Motor neuron (in vitro differentiated cells): ENCODE measurements at regions of chr6 and their contacts with region 1.

Region 1: DNA sequence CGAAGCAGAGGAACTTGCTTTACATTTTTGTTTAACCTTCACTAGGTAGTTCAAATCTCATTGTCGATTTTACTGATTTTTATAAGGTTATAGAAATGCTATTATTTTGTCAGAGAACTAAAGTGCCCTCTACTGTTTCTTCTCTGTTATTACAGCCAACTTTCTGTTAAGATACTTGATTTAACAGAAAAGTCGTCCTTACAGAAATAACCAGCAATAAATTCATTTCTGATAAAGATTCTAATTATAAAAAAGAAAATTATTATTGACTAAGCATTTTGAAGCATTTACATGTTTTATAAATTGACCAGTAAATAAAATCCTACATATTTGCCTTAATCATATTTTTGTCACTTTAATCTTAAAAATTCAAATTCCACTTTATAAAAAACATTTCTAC is 60.8 kb downstream of the OGFRL1 start:
- ATAC-seq: no peak
- H3K4me3 ChIP-seq: no peak overlapping the region
- H3K27ac ChIP-seq: no peak overlapping the region
- H3K4me1 ChIP-seq: peaks cover 10 to 26% of the 10 kb centered on the region in 2 donors

Region 2: GRCh38 chr6:70336996-70337742 is 1012.2 kb before region 1 on chr6:
- in situ Hi-C with region 1: no loop called
- ATAC-seq: no peak
- H3K4me3 ChIP-seq: no peak overlapping the region
- H3K27ac ChIP-seq: no peak overlapping the region
- H3K4me1 ChIP-seq: no peaks in the 10 kb centered on the region

Region 3: GRCh38 chr6:71043902-71044301 is 305.5 kb before region 1 on chr6:
- in situ Hi-C with region 1: loop called in 1 of 9 experiments (anchors 25 kb)
- ATAC-seq: no peak
- H3K4me3 ChIP-seq: no peak overlapping the region
- H3K27ac ChIP-seq: no peak overlapping the region
- H3K4me1 ChIP-seq: peaks cover 20 to 32% of the 10 kb centered on the region in 2 donors

Region 4: DNA sequence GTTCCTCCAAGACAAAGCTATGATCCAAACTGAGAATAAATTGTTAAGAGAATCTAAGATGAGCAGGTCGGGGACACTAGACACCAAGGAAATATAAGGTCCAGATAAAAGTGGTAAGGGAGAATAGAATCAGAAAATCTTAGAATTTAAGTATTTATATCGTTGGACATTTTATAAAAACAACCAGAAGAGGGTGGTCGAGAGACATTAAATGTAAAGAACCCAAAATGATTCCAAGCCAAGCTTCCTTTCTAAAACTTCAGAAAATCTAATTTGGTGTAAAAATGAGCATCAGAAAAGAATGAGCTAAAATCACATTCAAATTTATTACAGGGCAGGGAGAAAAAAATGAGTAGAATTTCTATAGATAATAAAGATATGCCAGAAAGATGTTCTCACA is 158.6 kb before region 1 on chr6:
- in situ Hi-C with region 1: loop called in 3 of 9 experiments (anchors 25 kb)
- ATAC-seq: no peak
- H3K4me3 ChIP-seq: no peak overlapping the region
- H3K27ac ChIP-seq: no peak overlapping the region
- H3K4me1 ChIP-seq: peaks cover 2 to 8% of the 10 kb centered on the region in 2 donors

Region 5: GRCh38 chr6:71205336-71205956 is 143.9 kb before region 1 on chr6:
- in situ Hi-C with region 1: loop called in 1 of 9 experiments (anchors 25 kb)
- ATAC-seq: no peak
- H3K4me3 ChIP-seq: no peak overlapping the region
- H3K27ac ChIP-seq: no peak overlapping the region
- H3K4me1 ChIP-seq: peaks cover 3 to 9% of the 10 kb centered on the region in 2 donors